Right ventricle myocardium superior (tissue), 1 donor: ENCODE measurements at regions of chr6 and their contacts with region 1.

Region 1: GRCh38 chr6:137271245-137272183 is 52.3 kb upstream of the IFNGR1 start:
- DNase-seq: no peak
- ATAC-seq: peak; percentile 87

Region 2: GRCh38 chr6:137341681-137342195 is 70.2 kb after region 1 on chr6:
- intact Hi-C with region 1: no loop called
- DNase-seq: peak; percentile 63
- ATAC-seq: peak; percentile 56

Region 3: GRCh38 chr6:137415127-137415833 is 143.8 kb after region 1 on chr6:
- intact Hi-C with region 1: loop called (anchors 5 kb)
- DNase-seq: peak; percentile 61
- ATAC-seq: peak; percentile 94